Left ventricle myocardium superior (tissue), 1 donor: ENCODE measurements at regions of chr2 and their contacts with region 1.

Region 1: DNA sequence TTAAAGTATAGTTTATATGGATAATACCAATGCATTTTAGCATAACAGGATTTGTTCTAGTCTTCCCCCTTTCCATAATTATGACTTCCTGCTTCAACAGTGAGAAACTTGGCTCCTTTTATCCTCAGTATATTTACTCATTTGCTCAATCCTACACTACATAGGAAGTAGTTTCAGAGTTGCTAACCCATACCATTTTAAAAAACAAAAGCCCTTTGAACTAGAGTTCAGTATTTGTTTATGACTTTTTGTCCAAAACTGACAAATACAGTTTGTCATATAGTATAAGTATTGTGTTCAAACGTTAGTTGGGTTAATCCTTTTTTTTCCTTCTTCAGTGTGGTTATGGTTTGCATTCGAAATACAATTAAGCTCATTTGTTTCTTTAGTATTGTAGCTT is 5.9 kb upstream of the DNAJC27 start:
- DNase-seq: no peak
- ATAC-seq: no peak

Region 2: DNA sequence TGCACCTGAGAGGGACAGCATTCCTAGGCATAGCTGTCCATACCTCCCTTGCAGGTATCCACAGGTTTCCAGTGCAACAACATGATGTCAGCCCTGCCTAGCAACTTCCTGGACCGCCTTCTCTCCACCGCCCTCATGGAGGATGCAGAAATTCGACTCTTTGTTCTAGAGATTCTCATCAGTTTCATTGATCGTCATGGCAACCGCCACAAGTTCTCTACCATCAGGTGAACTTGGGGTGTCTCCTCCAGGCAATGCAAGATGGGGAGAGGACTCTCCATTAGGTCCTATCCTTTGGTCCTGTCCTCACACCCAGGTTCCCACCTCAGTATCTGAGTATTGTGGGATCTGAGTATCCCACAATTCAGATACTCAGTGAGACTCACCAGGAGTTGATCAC is 157.8 kb after region 1 on chr2:
- intact Hi-C with region 1: loop called (anchors 5 kb)
- DNase-seq: no peak
- ATAC-seq: no peak

Region 3: DNA sequence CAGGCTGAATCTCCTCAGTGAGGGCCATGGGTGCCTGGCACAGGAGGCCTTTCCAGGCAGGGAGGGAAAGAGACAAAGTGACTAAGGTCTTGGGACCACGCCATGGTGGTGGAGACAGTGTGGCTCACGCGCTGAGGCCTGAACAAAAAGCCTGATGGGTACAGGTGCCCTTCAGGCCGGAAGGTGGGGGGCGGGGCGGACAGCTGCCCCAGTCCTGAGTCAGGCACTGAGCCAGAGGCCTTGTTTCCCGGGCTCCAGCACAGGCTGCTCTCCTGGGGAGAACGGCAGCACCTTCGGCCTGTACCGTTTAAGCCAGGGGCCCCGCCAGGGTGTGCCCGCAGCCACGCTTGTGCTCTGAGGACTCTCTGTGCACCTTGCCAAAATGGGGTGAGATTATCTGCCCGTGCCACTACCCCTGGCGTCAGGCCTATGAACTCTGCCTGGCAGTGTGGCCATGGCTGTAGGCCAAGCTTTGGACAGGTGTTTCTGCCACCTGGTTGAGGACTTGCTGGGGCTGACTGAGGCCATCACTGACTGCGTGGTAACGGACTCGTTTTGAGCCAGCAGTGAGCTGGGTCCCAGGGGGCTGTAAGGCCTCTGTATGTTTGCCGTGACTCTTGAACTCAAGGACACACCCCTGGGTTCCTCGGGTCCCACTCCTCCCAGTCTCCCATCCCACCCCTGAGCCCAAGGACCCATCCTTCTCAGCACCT is 395.8 kb after region 1 on chr2:
- intact Hi-C with region 1: no loop called
- DNase-seq: peak; percentile 62
- ATAC-seq: peak; percentile 59